AG04449 (cell line): ENCODE measurements at regions of chr10 and their contacts with region 1.

Region 1: DNA sequence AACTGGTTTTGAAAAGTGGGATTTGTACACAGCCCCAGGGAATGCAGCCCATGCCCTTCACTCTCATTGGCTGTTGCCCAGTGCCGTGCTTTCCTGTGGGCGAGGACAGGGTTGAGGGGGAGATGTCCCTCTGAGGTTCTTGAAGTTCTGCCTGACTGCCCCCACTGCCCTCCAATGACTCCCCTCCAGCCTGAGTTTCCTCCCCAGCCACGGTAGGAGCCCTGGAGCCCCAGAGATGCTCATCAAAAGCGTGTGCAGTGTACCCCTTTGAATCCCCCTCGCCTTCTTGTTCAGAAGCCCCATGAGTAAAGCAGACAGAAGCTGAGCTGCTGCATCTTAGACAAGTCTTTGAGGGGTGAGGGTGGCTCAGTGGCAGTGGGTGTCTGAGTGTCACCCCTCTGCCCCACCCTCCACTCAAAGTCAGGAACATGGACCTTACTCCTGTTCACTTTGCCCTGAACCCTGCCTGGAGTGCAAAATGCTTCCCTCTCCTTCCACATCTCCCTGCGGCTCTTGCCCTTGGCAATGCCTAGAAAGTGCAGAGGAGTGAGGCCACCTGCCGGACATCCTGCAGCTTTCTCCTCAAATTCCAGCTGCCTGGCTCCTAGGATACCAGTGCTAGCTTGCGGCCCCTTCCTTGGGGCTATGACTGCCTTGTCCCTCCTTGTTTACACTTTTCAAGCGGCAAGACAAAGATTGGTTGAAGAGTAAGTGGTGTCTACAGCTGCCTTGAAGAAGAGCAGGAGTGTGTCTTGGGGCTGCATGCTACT is 19.9 kb downstream of the FAM241B start:
- DNase-seq: no peak
- H3K4me3 ChIP-seq: no peak overlapping the region
- CTCF ChIP-seq: no peak

Region 2: DNA sequence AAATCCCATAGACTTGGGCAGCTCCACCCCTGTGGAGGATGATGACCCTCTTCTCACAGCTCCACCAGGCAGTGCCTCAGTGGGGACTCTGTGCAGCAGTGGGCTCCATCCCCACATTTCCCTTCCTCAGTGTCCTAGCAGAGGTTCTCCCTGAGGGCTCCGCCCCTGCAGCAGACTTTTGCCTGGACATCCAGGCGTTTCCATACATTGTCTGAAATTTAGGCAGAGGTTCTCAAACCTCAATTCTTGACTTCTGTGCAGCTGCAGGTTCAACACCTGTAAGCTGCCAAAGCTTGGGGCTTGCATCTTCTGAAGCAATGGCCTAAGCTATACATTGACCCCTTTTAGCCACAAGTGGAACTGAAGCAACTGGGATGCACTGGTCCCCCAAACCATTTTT is 108.5 kb before region 1 on chr10:
- CTCF ChIA-PET with region 1: no interaction called
- POLR2A ChIA-PET with region 1: no interaction called
- DNase-seq: no peak
- H3K4me3 ChIP-seq: no peak overlapping the region
- CTCF ChIP-seq: no peak

Region 3: GRCh38 chr10:69639291-69640195 is 10.4 kb before region 1 on chr10:
- CTCF ChIA-PET with region 1: interaction called, 89 read pairs
- POLR2A ChIA-PET with region 1: no interaction called
- DNase-seq: no peak
- H3K4me3 ChIP-seq: no peak overlapping the region
- CTCF ChIP-seq: peak; percentile 76

Region 4: GRCh38 chr10:69874449-69874848 is 224.5 kb after region 1 on chr10:
- CTCF ChIA-PET with region 1: no interaction called
- POLR2A ChIA-PET with region 1: no interaction called
- DNase-seq: no peak
- H3K4me3 ChIP-seq: no peak overlapping the region
- CTCF ChIP-seq: no peak

Region 5: DNA sequence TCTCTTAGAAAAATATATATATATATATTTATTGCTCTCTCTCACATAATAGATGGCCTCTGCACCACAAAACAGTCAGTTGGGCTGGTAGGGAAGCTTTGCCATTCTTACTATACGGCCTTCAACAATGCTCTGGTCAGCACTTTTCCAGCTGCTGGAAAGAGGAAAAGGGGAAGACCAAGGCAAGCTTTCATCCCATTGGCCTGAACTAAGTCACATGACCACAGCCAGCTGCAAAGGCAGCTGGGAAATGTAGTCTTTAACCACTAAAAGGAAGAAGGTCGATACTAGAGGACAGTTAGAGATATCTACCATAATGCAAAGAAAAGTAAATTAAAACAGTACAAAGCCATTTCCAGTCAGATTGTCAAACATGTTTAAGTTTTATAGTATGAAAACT is 344.3 kb after region 1 on chr10:
- CTCF ChIA-PET with region 1: no interaction called
- POLR2A ChIA-PET with region 1: no interaction called
- DNase-seq: no peak
- H3K4me3 ChIP-seq: no peak overlapping the region
- CTCF ChIP-seq: no peak